PC-3 (cell line): ENCODE measurements at regions of chr4 and their contacts with region 1.

Region 1: DNA sequence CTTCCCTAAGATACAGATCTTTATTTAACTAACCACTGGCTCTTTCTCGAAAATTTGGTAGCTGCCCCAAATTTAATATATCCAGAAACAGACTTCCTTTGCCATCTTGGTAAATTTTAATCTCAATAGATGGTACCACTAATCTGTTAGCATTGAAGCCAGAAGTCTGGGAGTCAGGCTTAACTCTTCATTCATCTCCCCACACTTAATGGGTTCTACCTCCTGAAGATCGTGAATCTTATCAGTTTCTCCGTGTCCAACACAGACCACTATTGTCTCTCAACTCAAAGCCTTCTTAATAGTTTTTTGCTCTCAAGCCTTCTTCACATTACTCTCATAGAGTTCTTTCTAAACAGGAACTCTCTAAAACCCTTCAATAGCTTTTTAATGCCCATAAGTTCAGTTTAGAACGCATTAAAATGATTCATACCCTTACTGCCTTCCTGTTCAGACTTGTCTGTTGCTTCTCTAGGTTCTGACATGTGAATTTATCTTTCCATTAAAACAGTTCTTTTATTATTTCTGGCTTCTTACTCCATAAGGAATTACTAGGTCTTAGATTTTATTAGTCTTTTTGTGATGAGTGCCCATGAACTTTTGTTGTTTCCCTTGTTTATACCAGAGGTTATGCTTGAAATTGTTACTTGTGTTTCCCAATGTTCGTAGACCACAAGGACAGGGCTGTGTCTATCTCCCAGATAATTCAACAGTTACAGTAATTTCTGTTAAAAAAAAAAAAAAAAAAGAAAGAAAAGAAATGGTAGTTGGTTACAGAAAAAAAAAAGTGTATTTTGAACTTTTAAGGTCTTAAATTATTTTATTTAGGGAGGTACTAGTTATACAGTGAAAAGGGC is 54.7 kb downstream of the SMARCAD1 start:
- DNase-seq: no peak
- ATAC-seq: no peak
- H3K4me3 ChIP-seq: no peak overlapping the region
- H3K27ac ChIP-seq: no peak overlapping the region
- H3K4me1 ChIP-seq: no peaks in the 10 kb centered on the region
- H3K27me3 ChIP-seq: no peaks in the 10 kb centered on the region
- CTCF ChIP-seq: no peak

Region 2: GRCh38 chr4:94235825-94236224 is 26.6 kb before region 1 on chr4:
- CTCF ChIA-PET with region 1: no interaction called
- POLR2A ChIA-PET with region 1: no interaction called
- intact Hi-C with region 1: loop called (anchors 1 kb)
- DNase-seq: no peak
- ATAC-seq: no peak
- H3K4me3 ChIP-seq: no peak overlapping the region
- H3K27ac ChIP-seq: no peak overlapping the region
- H3K4me1 ChIP-seq: peaks cover 6% of the 10 kb centered on the region; the same call in 1 of the 2 replicates
- H3K27me3 ChIP-seq: no peaks in the 10 kb centered on the region
- CTCF ChIP-seq: no peak